ENCODE measurements at regions of chr1 and their contacts with region 1.

Region 1: GRCh38 chr1:25343872-25344271 is 5.7 kb downstream of the TMEM50A start:
- DNase-seq: peak; percentile 61
- H3K4me3 ChIP-seq: no peak overlapping the region
- H3K27ac ChIP-seq: peak overlapping the region; percentile 13
- H3K4me1 ChIP-seq: peaks cover 25% of the 10 kb centered on the region
- H3K27me3 ChIP-seq: no peaks in the 10 kb centered on the region
- CTCF ChIP-seq: no peak

Region 2: DNA sequence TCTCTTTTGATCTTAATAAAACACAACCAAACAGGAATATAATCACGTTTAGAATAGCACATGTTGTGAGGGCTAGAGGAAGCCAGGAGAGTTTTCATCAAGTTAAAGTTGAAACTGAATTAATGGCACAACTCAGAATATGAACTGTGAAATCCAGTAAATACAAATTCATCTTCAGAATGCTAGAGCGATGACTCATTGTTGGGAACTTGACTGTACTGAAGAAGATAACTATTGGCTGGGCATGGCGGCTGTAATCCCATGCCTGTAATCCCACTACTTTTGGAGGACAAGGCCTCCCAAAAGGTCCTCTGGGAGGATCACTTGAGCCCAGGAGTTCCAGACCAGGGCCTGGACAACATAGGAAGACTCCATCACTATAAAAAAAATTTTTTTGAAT is 120.4 kb before region 1 on chr1:
- CTCF ChIA-PET with region 1: no interaction called
- dilution Hi-C with region 1: loop called (anchors 10 kb)
- in situ Hi-C with region 1: no loop called
- intact Hi-C with region 1: no loop called
- DNase-seq: no peak
- H3K4me3 ChIP-seq: no peak overlapping the region
- H3K27ac ChIP-seq: no peak overlapping the region
- H3K4me1 ChIP-seq: no peaks in the 10 kb centered on the region
- H3K27me3 ChIP-seq: no peaks in the 10 kb centered on the region
- CTCF ChIP-seq: no peak